SK-N-SH (cell line): ENCODE measurements at regions of chr1 and their contacts with region 1.

Region 1: DNA sequence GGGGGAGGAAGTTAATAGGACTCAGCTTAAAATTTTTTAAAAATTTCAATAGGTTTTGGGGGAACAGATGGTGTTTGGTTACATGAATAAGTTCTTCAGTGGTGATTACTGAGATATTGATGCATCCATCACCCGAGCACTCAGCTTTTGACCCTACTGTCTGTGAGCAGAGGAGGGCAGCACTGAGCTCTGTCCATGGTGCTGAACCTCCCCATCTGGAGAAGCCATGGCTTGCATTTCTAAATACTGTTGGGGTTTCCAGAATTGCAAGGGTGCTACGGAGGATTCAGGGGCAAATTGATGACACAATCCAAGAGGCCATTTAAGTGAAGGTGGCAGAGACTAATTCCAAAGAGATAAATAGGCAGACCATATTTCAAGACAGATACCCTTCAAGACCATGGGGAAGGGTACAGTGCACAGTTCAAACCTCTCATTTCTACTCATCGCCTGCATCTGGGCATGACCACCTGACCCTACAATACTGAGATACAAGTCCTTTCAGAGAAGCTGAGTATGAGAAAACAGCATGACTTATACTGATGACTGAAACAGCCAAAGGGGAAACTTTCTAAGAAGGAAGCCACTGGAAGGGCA is 17.2 kb downstream of the SYT2 start:
- DNase-seq: peak; percentile 54
- H3K4me3 ChIP-seq: no peak overlapping the region
- H3K27ac ChIP-seq: no peak overlapping the region
- H3K4me1 ChIP-seq: peaks cover 0 to 8% of the 10 kb centered on the region in 2 experiments; a peak in 1 of 4 replicates
- H3K27me3 ChIP-seq: peaks cover 26% of the 10 kb centered on the region
- CTCF ChIP-seq: peak; percentile 31; the same call in 1 of the 2 replicates
- EP300 ChIP-seq: no peak
- RAD21 ChIP-seq: no peak; the same call in 1 of the 2 replicates

Region 2: GRCh38 chr1:202638019-202638762 is 54.9 kb before region 1 on chr1:
- CTCF ChIA-PET with region 1: no interaction called
- POLR2A ChIA-PET with region 1: no interaction called
- DNase-seq: no peak
- H3K4me3 ChIP-seq: no peak overlapping the region
- H3K27ac ChIP-seq: no peak overlapping the region
- H3K4me1 ChIP-seq: peaks cover 0 to 8% of the 10 kb centered on the region in 2 experiments; a peak in 1 of 4 replicates
- H3K27me3 ChIP-seq: peaks cover 43% of the 10 kb centered on the region
- CTCF ChIP-seq: no peak
- EP300 ChIP-seq: no peak
- RAD21 ChIP-seq: no peak

Region 3: GRCh38 chr1:202656951-202657646 is 36.0 kb before region 1 on chr1:
- CTCF ChIA-PET with region 1: interaction called, 15 read pairs
- POLR2A ChIA-PET with region 1: no interaction called
- DNase-seq: no peak
- H3K4me3 ChIP-seq: no peak overlapping the region
- H3K27ac ChIP-seq: no peak overlapping the region
- H3K4me1 ChIP-seq: peaks cover 0 to 4% of the 10 kb centered on the region in 2 experiments; a peak in 1 of 4 replicates
- H3K27me3 ChIP-seq: no peaks in the 10 kb centered on the region; the same call in none of the 2 replicates
- CTCF ChIP-seq: peak; percentile 30; the same call in 1 of the 2 replicates
- EP300 ChIP-seq: no peak
- RAD21 ChIP-seq: no peak

Region 4: DNA sequence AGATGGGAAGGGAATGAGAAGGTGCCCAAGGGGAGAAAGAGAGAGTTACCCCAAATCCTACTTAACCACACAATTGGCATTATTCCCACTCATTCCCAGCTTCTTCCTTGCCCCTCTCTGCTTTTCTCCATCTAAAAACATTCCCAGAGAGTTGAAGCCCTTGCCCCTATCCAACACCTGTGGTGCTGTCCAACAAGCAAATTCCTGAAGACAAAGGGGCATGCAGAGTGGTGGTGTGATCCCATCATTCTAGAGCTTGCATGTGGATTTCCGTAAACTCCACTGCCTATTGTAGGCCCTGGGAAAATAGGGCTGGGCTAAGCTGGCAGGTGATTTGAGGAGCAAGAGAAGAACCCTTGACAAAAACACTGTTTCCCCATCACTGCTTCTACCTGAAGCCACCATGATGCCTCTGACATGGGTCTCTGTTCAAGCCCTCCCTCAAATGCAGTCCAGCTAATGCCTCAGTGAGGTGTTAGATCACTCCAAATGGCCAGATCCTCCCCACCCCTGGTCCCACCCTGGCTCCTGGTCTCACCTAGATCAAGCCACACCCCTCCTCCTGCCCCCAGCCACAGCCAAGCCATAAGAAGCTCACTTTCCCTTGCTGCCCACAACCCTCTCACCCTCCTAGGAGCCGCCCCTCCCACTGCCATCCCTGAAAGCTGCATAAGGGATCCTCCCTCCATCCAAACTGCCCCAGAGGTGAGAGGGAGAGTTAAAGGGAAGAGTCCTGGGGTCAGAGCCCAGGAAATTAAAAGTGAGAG is 12.3 kb before region 1 on chr1:
- CTCF ChIA-PET with region 1: interaction called, 10 read pairs
- POLR2A ChIA-PET with region 1: no interaction called
- DNase-seq: no peak
- H3K4me3 ChIP-seq: no peak overlapping the region
- H3K27ac ChIP-seq: no peak overlapping the region
- H3K4me1 ChIP-seq: peaks cover 0 to 4% of the 10 kb centered on the region in 2 experiments; a peak in 1 of 4 replicates
- H3K27me3 ChIP-seq: peaks cover 25% of the 10 kb centered on the region; the same call in 1 of the 2 replicates
- CTCF ChIP-seq: no peak
- EP300 ChIP-seq: no peak
- RAD21 ChIP-seq: no peak

Region 5: GRCh38 chr1:202710070-202711045 is 17.3 kb after region 1 on chr1 and contains the start of gene SYT2:
- CTCF ChIA-PET with region 1: interaction called, 14 read pairs
- POLR2A ChIA-PET with region 1: no interaction called
- DNase-seq: peak; percentile 88
- H3K4me3 ChIP-seq: peak within 1 kb of the TSS; percentile 41 to 51; a peak in 3 of 4 replicates
- H3K27ac ChIP-seq: no peak within 1 kb of the TSS
- H3K4me1 ChIP-seq: peaks cover 0 to 30% of the 10 kb centered on the region in 2 experiments; a peak in 1 of 4 replicates
- H3K27me3 ChIP-seq: peaks cover 57% of the 10 kb centered on the region
- CTCF ChIP-seq: no peak
- EP300 ChIP-seq: no peak
- RAD21 ChIP-seq: no peak
- polyA plus RNA-seq, gene SYT2: 0.03 and 0.05 TPM in 2 replicates

Region 6: GRCh38 chr1:202791077-202791747 is 98.2 kb after region 1 on chr1:
- CTCF ChIA-PET with region 1: no interaction called
- POLR2A ChIA-PET with region 1: no interaction called
- DNase-seq: no peak
- H3K4me3 ChIP-seq: no peak overlapping the region
- H3K27ac ChIP-seq: no peak overlapping the region
- H3K4me1 ChIP-seq: peaks cover under 1 to 3% of the 10 kb centered on the region in 2 experiments; a peak in 1 of 4 replicates
- H3K27me3 ChIP-seq: no peaks in the 10 kb centered on the region
- CTCF ChIP-seq: no peak
- EP300 ChIP-seq: no peak
- RAD21 ChIP-seq: no peak